ENCODE measurements at regions of chr1 and their contacts with region 1.

Region 1: DNA sequence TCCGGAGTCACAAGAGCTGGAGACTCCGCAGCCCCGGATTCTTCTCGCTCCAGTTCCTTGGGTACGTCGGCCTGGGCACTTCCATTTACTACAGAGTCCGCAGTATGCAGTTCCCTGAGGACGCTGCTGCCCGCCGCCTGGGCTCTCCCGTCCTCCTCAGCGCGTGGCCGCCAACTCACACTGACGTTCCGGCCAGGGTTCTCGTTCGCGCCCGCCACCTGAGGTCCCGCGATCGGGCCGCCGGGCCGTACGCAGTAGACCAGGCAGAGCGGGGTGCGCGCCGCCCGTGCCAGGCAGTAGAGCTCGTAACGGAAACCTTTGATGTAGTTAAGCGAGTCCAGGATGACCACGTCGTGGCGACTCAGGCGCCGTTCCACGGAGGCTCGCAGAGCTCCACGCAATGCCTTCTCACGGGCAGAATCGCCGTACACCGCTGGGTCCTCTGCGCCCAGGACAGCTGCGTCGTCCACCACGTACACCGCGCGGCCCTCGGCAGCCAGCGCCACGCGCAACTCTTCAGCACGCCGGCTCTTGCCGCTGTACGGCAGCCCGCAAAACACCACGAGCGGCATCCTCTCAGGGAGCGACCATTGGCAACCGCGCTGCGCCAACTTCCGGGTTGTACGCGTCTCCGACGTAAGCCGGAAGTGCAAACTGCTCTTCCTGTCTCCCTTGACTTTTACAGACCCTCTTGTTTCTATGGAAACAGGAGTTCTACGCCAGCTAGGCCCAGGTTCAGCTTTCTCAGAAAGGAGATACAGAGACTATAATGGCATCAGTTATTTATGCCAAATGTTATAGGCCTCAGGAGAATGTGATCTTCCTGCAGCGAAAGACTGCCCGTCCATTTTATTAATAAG is at the start of gene KTI12:
- DNase-seq: peak; percentile 88 to 92 (median 90)
- H3K4me3 ChIP-seq: peak within 1 kb of the TSS; percentile 80 to 88
- H3K4me3 Mint-ChIP-seq: peak within 1 kb of the TSS; percentile 86 to 96 (median 93)
- H3K27ac ChIP-seq: peak within 1 kb of the TSS; percentile 81
- H3K27ac Mint-ChIP-seq: peak within 1 kb of the TSS; percentile 95 to 99 (median 96)
- H3K4me1 ChIP-seq: peaks cover 33% of the 10 kb centered on the region
- H3K4me1 Mint-ChIP-seq: peaks cover 31 to 45% (median 34%) of the 10 kb centered on the region in 4 donors
- H3K27me3 ChIP-seq: no peaks in the 10 kb centered on the region
- H3K27me3 Mint-ChIP-seq: no peaks in the 10 kb centered on the region
- total RNA-seq, gene KTI12: 14.0 to 15.6 TPM

Region 2: DNA sequence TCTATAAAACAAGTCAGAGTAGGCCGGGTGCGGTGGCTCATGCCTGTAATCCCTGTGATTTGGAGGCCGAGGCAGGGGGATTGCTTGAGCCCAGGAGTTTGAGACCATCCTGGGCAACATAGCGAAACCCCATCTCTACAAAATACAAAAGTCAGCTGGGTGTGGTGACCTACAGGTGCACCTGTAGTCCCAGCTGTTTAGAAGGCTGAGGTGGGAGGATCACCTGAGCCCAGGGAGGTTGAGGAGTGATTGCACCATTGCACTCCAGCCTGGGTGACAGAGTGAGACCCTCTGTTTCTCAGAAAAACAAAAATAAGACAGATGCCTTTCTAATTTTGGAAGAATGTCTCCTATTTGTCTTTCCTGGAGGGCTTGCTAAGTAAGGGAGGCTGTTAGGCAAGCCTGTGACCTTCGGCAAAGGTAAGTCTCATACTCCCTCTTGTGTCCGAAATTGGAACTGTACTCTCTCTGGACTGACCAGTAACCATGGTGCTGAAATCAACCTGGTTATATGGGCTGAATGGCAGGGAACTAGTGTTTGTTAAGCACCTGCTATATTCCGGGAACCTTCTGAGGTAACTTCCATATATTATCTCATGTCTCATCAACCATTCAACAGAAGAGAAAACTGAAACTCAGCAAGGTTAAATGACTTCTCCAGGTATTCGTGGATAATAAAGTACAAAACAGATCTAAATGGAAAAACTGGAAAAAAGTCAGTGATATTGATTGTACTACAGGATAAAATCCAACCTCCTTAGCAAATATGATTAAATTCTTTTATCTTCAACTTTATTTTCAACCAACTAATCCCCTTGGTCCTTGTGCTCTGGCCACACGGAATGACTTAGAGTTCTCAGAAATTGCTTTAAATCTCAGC is 31.1 kb before region 1 on chr1:
- CTCF ChIA-PET with region 1: no interaction called
- POLR2A ChIA-PET with region 1: no interaction called
- intact Hi-C with region 1: no loop called
- DNase-seq: peak; percentile 52 to 76 (median 68)
- H3K4me3 ChIP-seq: no peak overlapping the region
- H3K4me3 Mint-ChIP-seq: no peak overlapping the region
- H3K27ac ChIP-seq: no peak overlapping the region
- H3K27ac Mint-ChIP-seq: no peak overlapping the region
- H3K4me1 ChIP-seq: no peaks in the 10 kb centered on the region
- H3K4me1 Mint-ChIP-seq: peaks cover 0 to 2% (median 0%) of the 10 kb centered on the region in 4 donors
- H3K27me3 ChIP-seq: no peaks in the 10 kb centered on the region
- H3K27me3 Mint-ChIP-seq: peaks cover 9 to 20% of the 10 kb centered on the region in 2 donors

Region 3: DNA sequence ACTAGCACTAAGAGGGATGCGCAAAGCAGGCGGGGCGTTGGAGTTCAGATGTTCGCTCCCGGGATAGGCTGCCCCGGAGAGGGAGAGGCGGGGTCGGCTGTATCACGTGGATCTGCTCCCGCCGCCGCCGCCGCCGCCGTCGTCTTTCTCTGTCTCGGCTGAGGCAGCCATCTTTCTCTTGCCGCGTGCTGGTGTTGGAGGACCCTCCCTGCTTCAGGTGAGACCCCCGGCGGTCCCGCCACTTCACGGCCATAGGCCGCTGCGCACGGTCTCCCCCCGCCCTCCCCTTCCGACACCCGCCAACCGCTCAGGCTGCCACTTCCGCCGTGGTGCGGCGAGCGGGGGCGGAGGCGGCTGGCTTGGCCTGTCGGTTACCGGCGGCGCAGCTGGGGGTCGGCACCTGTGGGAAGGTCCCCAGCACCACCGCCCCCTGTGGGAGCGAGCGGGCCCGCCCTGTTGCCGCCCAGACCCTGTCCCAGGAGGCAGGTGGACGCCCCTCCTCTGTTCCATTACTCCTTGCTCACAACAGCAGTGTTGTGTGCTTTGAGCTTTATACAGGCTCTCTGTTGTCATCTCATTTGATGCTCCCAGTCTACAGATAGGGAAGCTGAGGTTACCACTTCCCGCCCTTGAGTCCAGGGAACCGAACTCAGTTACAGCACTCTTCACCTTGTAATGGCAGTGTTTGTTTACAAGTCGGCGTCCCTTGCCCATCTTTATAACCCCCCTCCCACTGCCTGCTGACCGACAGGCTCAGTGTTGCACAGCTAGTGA is 22.9 kb after region 1 on chr1 and contains the start of gene BTF3L4:
- CTCF ChIA-PET with region 1: interaction called, 4 read pairs
- POLR2A ChIA-PET with region 1: interaction called, 67 read pairs
- intact Hi-C with region 1: loop called (anchors 1 kb)
- DNase-seq: peak; percentile 89 to 97 (median 91)
- H3K4me3 ChIP-seq: peak within 1 kb of the TSS; percentile 81 to 92
- H3K4me3 Mint-ChIP-seq: peak within 1 kb of the TSS; percentile 98 to 100 (median 98)
- H3K27ac ChIP-seq: peak within 1 kb of the TSS; percentile 88
- H3K27ac Mint-ChIP-seq: peak within 1 kb of the TSS; percentile 84 to 98 (median 97)
- H3K4me1 ChIP-seq: peaks cover 56% of the 10 kb centered on the region
- H3K4me1 Mint-ChIP-seq: peaks cover 36 to 72% (median 57%) of the 10 kb centered on the region in 4 donors
- H3K27me3 ChIP-seq: no peaks in the 10 kb centered on the region
- H3K27me3 Mint-ChIP-seq: no peaks in the 10 kb centered on the region
- total RNA-seq, gene BTF3L4: 30.4 to 34.6 TPM

Region 4: DNA sequence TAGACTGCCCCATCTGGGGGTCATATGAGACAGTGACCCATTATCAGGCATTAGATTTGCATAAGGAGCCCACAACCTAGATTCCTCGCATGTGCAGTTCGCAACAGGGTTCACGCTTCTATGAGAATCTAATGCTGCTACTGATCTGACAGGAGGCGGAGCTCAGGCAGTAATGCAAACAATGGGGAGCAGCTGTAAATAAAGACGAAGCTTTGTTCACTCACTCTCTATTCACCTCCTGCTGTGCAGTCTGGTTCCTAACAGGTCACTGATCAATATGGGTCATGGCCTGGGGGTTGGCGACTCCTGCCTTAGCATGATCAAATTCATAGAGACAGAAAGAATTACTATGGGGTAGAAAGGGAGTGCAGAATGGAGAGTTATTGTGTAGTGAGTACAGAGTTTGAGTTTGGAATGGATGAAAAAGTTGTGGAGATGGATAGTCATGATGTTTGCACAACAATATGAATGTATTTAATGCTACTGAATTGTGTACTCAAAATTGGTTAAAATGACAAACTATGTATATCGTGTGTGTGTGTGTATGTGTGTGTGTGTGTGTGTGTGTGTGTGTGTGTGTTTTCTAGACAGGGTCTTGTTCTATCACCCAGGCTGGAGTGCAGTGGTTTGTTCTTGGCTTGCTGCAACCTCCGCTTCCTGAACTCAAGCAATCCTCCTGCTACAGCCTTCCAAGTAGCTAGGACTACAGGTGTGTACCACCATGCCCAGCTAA is 64.9 kb after region 1 on chr1:
- CTCF ChIA-PET with region 1: no interaction called
- POLR2A ChIA-PET with region 1: no interaction called
- intact Hi-C with region 1: no loop called
- DNase-seq: no peak
- H3K4me3 ChIP-seq: no peak overlapping the region
- H3K4me3 Mint-ChIP-seq: no peak overlapping the region
- H3K27ac ChIP-seq: no peak overlapping the region
- H3K27ac Mint-ChIP-seq: no peak overlapping the region
- H3K4me1 ChIP-seq: no peaks in the 10 kb centered on the region
- H3K4me1 Mint-ChIP-seq: no peaks in the 10 kb centered on the region
- H3K27me3 ChIP-seq: no peaks in the 10 kb centered on the region
- H3K27me3 Mint-ChIP-seq: no peaks in the 10 kb centered on the region

Measured in CD4-positive, alpha-beta memory T cell (primary cell).